Left cardiac atrium (tissue), 4 donors: ENCODE measurements at regions of chr14 and their contacts with region 1.

Region 1: GRCh38 chr14:88667555-88668273 is 104.9 kb downstream of the ZC3H14 start:
- DNase-seq: no peak
- ATAC-seq: peak; percentile 79 to 82

Region 2: DNA sequence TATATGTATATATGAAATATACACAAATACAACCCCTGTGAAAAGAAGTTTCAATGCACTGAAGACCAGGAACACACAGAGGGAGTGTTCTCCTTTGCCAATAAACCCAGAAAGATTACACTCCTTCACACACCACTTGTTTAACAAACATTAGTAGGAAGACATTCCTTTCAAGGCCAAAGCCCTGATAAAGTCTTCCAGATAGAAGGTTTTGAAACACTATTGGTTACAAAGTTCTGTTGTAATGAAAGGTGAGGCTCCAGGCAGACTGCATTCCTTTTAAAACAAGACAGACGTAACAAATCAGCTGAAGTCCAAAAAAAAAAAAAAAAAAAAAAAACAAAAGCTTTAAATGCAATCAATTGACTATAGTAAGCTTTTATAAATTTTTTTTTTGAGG is 193.9 kb before region 1 on chr14:
- intact Hi-C with region 1: no loop called
- DNase-seq: no peak
- ATAC-seq: peak in 1 of 2 donors; percentile 48

Region 3: DNA sequence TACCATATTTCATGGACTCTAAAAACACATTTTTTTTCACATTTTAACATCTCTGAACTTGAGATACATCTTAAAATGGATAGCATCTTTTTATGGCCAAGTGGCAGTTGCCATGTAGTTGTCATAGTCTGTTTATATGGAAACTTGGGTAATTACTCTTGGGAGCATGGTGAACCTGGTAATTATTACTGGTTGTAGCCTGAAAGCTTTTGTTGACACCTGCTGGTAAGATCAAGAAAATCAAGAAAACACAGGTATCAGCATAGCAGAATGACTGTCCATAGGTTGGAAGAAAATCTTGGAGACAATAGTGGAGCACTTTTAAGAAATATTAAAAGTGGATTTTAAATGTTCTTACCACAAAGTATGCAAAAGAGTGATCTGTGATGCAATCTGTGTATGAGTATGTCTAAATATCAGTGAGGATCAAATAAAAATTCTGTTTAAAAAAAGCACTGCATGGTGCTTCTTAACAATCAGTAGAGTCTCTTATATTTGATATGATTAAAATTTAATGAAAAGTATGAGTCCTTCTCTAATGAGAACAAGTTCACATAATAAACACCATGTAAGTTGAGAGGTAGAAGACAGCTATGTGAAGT is 200.9 kb after region 1 on chr14:
- intact Hi-C with region 1: loop called (anchors 10 kb)
- DNase-seq: no peak
- ATAC-seq: peak in 1 of 2 donors; percentile 31